T-cell (primary cell): ENCODE measurements at regions of chr12 and their contacts with region 1.

Region 1: DNA sequence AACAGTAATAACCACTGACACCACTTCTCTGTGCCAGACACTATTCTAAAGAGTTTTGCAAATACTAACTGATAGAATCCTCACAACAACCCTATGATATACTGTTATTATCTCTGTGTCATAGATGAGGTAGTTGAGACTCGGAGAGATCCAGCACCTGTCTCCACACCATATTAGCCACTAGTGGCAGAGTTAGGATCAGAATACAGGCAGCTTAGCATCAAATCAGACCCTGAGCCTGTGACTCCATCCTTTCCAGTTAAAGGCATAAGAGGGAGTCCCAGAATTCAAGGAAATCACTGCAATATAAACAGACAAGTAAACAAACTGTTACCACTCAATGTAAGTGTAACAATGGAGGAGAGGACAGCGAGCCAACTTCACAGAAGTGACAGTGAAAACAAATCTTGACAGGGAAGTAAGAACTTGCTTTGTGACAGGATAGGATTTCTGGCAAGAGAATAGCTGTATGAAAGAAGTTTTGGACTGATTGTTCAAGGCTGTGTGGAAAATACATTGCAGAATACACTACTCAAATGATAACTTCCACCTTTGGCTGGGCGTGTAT is 11.7 kb upstream of the NAP1L1 start:
- DNase-seq: no peak
- ATAC-seq: no peak
- H3K4me3 ChIP-seq: no peak overlapping the region
- H3K4me3 Mint-ChIP-seq: no peak overlapping the region
- H3K27ac ChIP-seq: no peak overlapping the region
- H3K27ac Mint-ChIP-seq: no peak overlapping the region
- H3K4me1 ChIP-seq: no peaks in the 10 kb centered on the region
- H3K4me1 Mint-ChIP-seq: no peaks in the 10 kb centered on the region
- H3K27me3 ChIP-seq: peaks cover 0 to under 1% of the 10 kb centered on the region in 2 experiments
- H3K27me3 Mint-ChIP-seq: peaks cover 0 to 5% of the 10 kb centered on the region in 2 donors

Region 2: GRCh38 chr12:74671421-74671820 is 1424.7 kb before region 1 on chr12:
- CTCF ChIA-PET with region 1: no interaction called
- POLR2A ChIA-PET with region 1: interaction called in 1 of 2 experiments, 12 read pairs
- DNase-seq: no peak
- ATAC-seq: no peak
- H3K4me3 ChIP-seq: no peak overlapping the region
- H3K4me3 Mint-ChIP-seq: no peak overlapping the region
- H3K27ac ChIP-seq: no peak overlapping the region
- H3K27ac Mint-ChIP-seq: no peak overlapping the region
- H3K4me1 ChIP-seq: no peaks in the 10 kb centered on the region
- H3K4me1 Mint-ChIP-seq: no peaks in the 10 kb centered on the region
- H3K27me3 ChIP-seq: peaks cover 0 to 6% of the 10 kb centered on the region in 2 experiments
- H3K27me3 Mint-ChIP-seq: peaks cover 9 to 14% of the 10 kb centered on the region in 2 donors

Region 3: DNA sequence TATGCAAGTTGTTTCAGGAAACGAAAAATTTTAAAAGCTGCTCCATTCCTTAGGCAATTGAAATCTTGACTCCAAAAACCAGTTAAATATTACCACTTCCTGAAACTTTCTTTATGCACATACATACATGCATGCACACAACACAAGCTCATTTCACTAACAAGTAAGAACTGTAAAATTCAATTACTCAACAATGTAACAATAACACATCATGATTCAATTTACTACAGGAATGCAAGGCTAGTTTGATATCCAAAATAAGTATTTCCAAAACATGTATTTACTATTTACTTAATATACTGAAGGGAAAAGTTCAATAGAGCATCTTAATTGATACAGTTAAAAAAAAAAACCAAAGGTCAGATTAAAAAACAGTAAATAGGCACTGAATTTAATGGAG is 31.3 kb before region 1 on chr12:
- CTCF ChIA-PET with region 1: no interaction called
- POLR2A ChIA-PET with region 1: no interaction called
- DNase-seq: no peak
- ATAC-seq: no peak
- H3K4me3 ChIP-seq: no peak overlapping the region
- H3K4me3 Mint-ChIP-seq: no peak overlapping the region
- H3K27ac ChIP-seq: no peak overlapping the region
- H3K27ac Mint-ChIP-seq: no peak overlapping the region
- H3K4me1 ChIP-seq: peaks cover 0 to 2% of the 10 kb centered on the region in 2 experiments
- H3K4me1 Mint-ChIP-seq: peaks cover 42 to 45% (median 44%) of the 10 kb centered on the region in 3 donors
- H3K27me3 ChIP-seq: no peaks in the 10 kb centered on the region
- H3K27me3 Mint-ChIP-seq: no peaks in the 10 kb centered on the region

Region 4: GRCh38 chr12:77782034-77782433 is 1685.9 kb after region 1 on chr12:
- CTCF ChIA-PET with region 1: no interaction called
- POLR2A ChIA-PET with region 1: no interaction called
- DNase-seq: no peak
- ATAC-seq: no peak
- H3K4me3 ChIP-seq: no peak overlapping the region
- H3K4me3 Mint-ChIP-seq: no peak overlapping the region
- H3K27ac ChIP-seq: no peak overlapping the region
- H3K27ac Mint-ChIP-seq: no peak overlapping the region
- H3K4me1 ChIP-seq: no peaks in the 10 kb centered on the region
- H3K4me1 Mint-ChIP-seq: no peaks in the 10 kb centered on the region
- H3K27me3 ChIP-seq: no peaks in the 10 kb centered on the region
- H3K27me3 Mint-ChIP-seq: no peaks in the 10 kb centered on the region